ENCODE measurements at regions of chr1 and their contacts with region 1.

Region 1: GRCh38 chr1:26516987-26517765 is 12.4 kb upstream of the RPS6KA1 start:
- DNase-seq: no peak
- H3K4me3 ChIP-seq: no peak overlapping the region
- H3K27ac ChIP-seq: no peak overlapping the region
- H3K27me3 ChIP-seq: peaks cover 14% of the 10 kb centered on the region
- CTCF ChIP-seq: no peak

Region 2: GRCh38 chr1:26538480-26539412 is 21.6 kb after region 1 on chr1:
- CTCF ChIA-PET with region 1: interaction called, 14 read pairs
- POLR2A ChIA-PET with region 1: no interaction called
- DNase-seq: no peak
- H3K4me3 ChIP-seq: no peak overlapping the region
- H3K27ac ChIP-seq: no peak overlapping the region
- H3K27me3 ChIP-seq: no peaks in the 10 kb centered on the region
- CTCF ChIP-seq: peak; percentile 55